K562 (cell line): ENCODE measurements at regions of chr1 and their contacts with region 1.

Region 1: GRCh38 chr1:21898326-21899200 is 38.5 kb downstream of the HSPG2 start:
- DNase-seq: no peak
- ATAC-seq: no peak
- H3K4me3 ChIP-seq: no peak overlapping the region
- H3K27ac ChIP-seq: no peak overlapping the region
- H3K4me1 ChIP-seq: peaks cover 34 to 61% of the 10 kb centered on the region in 2 experiments
- H3K27me3 ChIP-seq: no peaks in the 10 kb centered on the region
- CTCF ChIP-seq: no peak
- EP300 ChIP-seq: no peak
- POLR2A ChIP-seq: no peak
- RAD21 ChIP-seq: no peak

Region 2: GRCh38 chr1:21703318-21703963 is 195.1 kb before region 1 on chr1:
- CTCF ChIA-PET with region 1: no interaction called
- POLR2A ChIA-PET with region 1: no interaction called
- in situ Hi-C with region 1: no loop called
- intact Hi-C with region 1: no loop called
- DNase-seq: peak; percentile 47 to 71 (median 54)
- ATAC-seq: peak; percentile 89
- H3K4me3 ChIP-seq: no peak overlapping the region
- H3K27ac ChIP-seq: peak overlapping the region; percentile 59
- H3K4me1 ChIP-seq: peaks cover 0 to 16% of the 10 kb centered on the region in 2 experiments; a peak in 2 of 5 replicates
- H3K27me3 ChIP-seq: no peaks in the 10 kb centered on the region
- CTCF ChIP-seq: peak; percentile 69
- EP300 ChIP-seq: no peak
- POLR2A ChIP-seq: no peak
- RAD21 ChIP-seq: peak; percentile 45 to 72; a peak in 3 of 4 replicates

Region 3: GRCh38 chr1:21886486-21887199 is 11.9 kb before region 1 on chr1:
- CTCF ChIA-PET with region 1: no interaction called
- POLR2A ChIA-PET with region 1: interaction called, 17 read pairs
- in situ Hi-C with region 1: no loop called
- intact Hi-C with region 1: no loop called
- DNase-seq: peak; percentile 81 to 89 (median 86)
- ATAC-seq: peak; percentile 98
- H3K4me3 ChIP-seq: no peak overlapping the region
- H3K27ac ChIP-seq: peak overlapping the region; percentile 64
- H3K4me1 ChIP-seq: peaks cover 15 to 41% of the 10 kb centered on the region in 2 experiments
- H3K27me3 ChIP-seq: no peaks in the 10 kb centered on the region
- CTCF ChIP-seq: no peak
- EP300 ChIP-seq: peak; percentile 38; the same call in 1 of the 2 replicates
- POLR2A ChIP-seq: no peak
- RAD21 ChIP-seq: no peak